PC-9 (cell line): ENCODE measurements at regions of chr7 and their contacts with region 1.

Region 1: GRCh38 chr7:148884299-148885022 is 370 bp upstream of the EZH2 start:
- DNase-seq: peak; percentile 75 to 96
- H3K4me3 ChIP-seq: peak overlapping the region; percentile 88
- H3K27ac ChIP-seq: peak overlapping the region; percentile 68
- H3K4me1 ChIP-seq: peaks cover 14% of the 10 kb centered on the region
- H3K27me3 ChIP-seq: no peaks in the 10 kb centered on the region
- CTCF ChIP-seq: no peak

Region 2: DNA sequence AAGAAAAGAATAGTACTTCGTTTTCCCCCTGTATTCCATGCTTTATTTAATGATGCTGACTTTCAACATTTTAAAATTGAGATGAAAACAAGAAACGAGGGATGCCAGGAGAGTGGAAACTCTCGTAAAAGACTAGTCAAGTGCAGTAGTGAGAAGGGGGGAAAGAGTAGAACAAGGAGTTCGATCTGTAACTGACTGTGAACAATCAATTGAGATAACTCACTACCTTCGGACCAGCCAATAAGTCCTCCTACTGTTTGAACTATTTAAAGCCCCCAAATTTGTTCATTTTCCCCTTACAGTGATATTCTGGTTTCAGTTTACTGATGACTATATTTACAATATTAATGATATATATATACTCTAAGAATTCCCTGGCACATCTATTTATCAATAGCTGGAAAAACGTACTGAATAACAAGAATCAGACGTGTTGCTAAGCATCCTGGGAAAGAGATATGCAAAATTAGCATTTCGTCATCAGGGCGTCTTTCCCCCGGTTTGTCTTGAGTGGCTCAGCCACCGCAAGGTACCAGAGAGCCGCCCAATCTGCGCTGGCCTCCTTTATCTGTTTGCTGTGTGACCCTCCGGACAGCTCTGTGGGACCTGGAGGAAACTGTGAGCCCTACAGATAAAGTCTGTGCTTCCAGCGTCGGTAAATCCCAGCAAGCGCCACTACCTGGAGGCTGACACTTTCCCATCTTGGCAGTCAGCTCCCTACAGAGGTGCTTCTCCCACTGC is 102.7 kb after region 1 on chr7:
- CTCF ChIA-PET with region 1: no interaction called
- POLR2A ChIA-PET with region 1: no interaction called
- intact Hi-C with region 1: loop called (anchors 5 kb)
- DNase-seq: peak; percentile 86 to 91
- H3K4me3 ChIP-seq: peak overlapping the region; percentile 88
- H3K27ac ChIP-seq: peak overlapping the region; percentile 78
- H3K4me1 ChIP-seq: peaks cover 46% of the 10 kb centered on the region
- H3K27me3 ChIP-seq: no peaks in the 10 kb centered on the region
- CTCF ChIP-seq: no peak